Right ventricle myocardium superior (tissue), 1 donor: ENCODE measurements at regions of chr7 and their contacts with region 1.

Region 1: GRCh38 chr7:6323967-6324701 is 51.7 kb upstream of the CYTH3 start:
- DNase-seq: no peak
- ATAC-seq: no peak

Region 2: DNA sequence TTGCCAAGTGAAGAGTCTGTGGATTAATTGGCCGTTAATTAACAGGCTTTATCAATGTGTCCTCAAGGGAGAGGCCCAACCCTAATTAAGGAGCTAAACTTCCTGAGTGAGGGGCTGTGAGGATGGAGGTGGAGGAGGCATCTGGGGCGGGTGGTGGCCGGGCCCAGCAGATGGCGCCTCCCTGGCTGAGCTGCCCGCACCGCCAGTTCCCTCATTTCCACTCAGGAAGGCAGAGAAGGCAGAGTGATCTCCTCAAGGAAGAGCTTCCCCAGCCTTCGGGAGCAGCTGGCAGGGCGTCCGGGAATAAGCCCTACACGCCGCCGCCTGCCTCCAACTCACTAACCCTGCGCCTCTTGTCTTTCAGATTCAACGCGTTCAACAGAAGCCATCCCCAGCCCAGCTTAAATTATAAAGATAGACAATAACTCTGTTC is 163.9 kb before region 1 on chr7:
- intact Hi-C with region 1: loop called (anchors 1 kb)
- DNase-seq: peak; percentile 80
- ATAC-seq: peak; percentile 77